Breast epithelium (tissue), 4 donors: ENCODE measurements at regions of chr2 and their contacts with region 1.

Region 1: GRCh38 chr2:176879426-176879995 is 333.1 kb upstream of the HNRNPA3 start:
- DNase-seq: no peak
- H3K4me3 ChIP-seq: no peak overlapping the region
- H3K27ac ChIP-seq: no peak overlapping the region
- H3K4me1 ChIP-seq: no peaks in the 10 kb centered on the region
- H3K27me3 ChIP-seq: no peaks in the 10 kb centered on the region
- CTCF ChIP-seq: no peak
- POLR2A ChIP-seq: no peak

Region 2: DNA sequence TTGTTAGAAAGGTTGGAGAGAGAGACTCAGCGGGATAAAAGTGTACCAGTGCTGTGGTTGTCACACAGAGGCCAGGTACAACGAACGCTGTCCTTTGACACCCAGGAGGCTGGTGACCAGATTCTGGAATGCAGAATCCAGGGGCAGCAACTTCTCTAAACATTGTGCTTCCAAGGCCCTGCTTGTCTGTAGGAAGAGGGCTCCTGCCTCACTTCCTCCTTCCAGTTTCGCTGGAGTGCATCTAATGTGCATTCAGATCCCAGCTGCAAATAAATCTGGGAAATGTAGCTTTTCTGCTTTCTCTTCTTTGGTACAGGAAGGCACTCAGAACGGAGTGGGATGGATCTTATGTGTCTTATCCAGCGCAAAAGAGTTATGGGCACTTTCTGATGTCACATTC is 1526.2 kb before region 1 on chr2:
- intact Hi-C with region 1: loop called (anchors 5 kb)
- DNase-seq: no peak
- H3K4me3 ChIP-seq: no peak overlapping the region
- H3K27ac ChIP-seq: no peak overlapping the region
- H3K4me1 ChIP-seq: no peaks in the 10 kb centered on the region
- H3K27me3 ChIP-seq: no peaks in the 10 kb centered on the region
- CTCF ChIP-seq: no peak
- POLR2A ChIP-seq: no peak

Region 3: DNA sequence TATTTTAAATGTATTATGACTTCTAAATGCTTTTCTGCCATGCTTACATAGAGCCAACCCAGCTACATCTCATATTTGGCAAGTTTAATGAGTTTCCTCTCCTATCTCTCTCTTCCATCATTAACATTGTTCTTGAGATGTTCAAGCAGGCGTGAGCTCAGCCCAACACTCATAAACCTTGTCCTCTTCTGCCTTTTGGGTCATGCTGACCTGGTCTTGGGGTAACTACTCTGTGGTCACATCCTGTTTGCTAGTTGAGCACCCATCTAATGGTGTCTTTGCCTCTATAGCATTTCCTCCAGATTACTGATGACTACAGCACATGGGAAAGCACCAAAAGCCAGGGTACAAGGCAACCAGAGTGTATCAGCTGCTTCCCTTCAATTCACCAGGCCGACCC is 33.8 kb before region 1 on chr2:
- intact Hi-C with region 1: no loop called
- DNase-seq: no peak
- H3K4me3 ChIP-seq: no peak overlapping the region
- H3K27ac ChIP-seq: no peak overlapping the region
- H3K4me1 ChIP-seq: no peaks in the 10 kb centered on the region
- H3K27me3 ChIP-seq: no peaks in the 10 kb centered on the region
- CTCF ChIP-seq: no peak
- POLR2A ChIP-seq: no peak

Region 4: GRCh38 chr2:177812708-177813396 is 933.3 kb after region 1 on chr2:
- intact Hi-C with region 1: no loop called
- DNase-seq: no peak
- H3K4me3 ChIP-seq: no peak overlapping the region
- H3K27ac ChIP-seq: no peak overlapping the region
- H3K4me1 ChIP-seq: no peaks in the 10 kb centered on the region
- H3K27me3 ChIP-seq: no peaks in the 10 kb centered on the region
- CTCF ChIP-seq: no peak
- POLR2A ChIP-seq: no peak